HEK293 (cell line): ENCODE measurements at regions of chrX and their contacts with region 1.

Region 1: GRCh38 chrX:49191033-49191871 is 5.1 kb upstream of the PRICKLE3 start:
- H3K4me3 ChIP-seq: peak overlapping the region; percentile 70
- H3K27ac ChIP-seq: peak overlapping the region; percentile 83
- H3K4me1 ChIP-seq: peaks cover 2% of the 10 kb centered on the region; the same call in 1 of the 2 replicates
- CTCF ChIP-seq: no peak

Region 2: GRCh38 chrX:49165901-49166881 is 25.1 kb before region 1 on chrX:
- CTCF ChIA-PET with region 1: interaction called, 16 read pairs
- POLR2A ChIA-PET with region 1: interaction called, 16 read pairs
- H3K4me3 ChIP-seq: no peak overlapping the region
- H3K27ac ChIP-seq: peak overlapping the region; percentile 77
- H3K4me1 ChIP-seq: peaks cover 7% of the 10 kb centered on the region
- CTCF ChIP-seq: peak; percentile 81

Region 3: DNA sequence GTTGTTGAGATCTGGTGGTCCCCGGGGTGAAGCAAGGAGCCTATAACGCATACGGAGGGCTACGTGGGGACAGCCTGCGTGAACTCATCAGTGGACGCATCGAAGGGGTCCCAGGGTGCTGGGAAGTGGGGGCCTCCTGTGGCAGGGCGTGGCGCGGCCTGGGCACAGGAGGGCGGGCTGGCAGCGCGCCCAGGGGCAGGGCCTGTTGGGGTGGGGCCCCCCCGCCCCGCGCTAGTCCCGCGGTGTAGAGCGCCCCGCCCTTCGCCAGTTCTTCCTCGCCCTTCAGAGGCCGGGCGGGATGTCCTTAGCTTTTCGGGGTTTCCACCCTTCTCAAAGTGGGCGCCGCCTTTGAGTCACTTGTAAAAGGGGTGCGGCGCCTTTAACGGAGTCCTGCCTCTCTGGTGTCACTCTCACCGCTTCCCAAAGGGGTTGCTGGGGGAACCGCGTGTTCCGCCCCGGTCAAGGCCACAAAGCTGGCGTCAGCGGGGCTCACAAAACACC is 18.9 kb before region 1 on chrX:
- CTCF ChIA-PET with region 1: interaction called, 16 read pairs
- POLR2A ChIA-PET with region 1: interaction called, 16 read pairs
- H3K4me3 ChIP-seq: peak overlapping the region; percentile 52
- H3K27ac ChIP-seq: peak overlapping the region; percentile 94
- H3K4me1 ChIP-seq: peaks cover under 1% of the 10 kb centered on the region; the same call in 1 of the 2 replicates
- CTCF ChIP-seq: peak; percentile 15; the same call in 1 of the 2 replicates

Region 4: DNA sequence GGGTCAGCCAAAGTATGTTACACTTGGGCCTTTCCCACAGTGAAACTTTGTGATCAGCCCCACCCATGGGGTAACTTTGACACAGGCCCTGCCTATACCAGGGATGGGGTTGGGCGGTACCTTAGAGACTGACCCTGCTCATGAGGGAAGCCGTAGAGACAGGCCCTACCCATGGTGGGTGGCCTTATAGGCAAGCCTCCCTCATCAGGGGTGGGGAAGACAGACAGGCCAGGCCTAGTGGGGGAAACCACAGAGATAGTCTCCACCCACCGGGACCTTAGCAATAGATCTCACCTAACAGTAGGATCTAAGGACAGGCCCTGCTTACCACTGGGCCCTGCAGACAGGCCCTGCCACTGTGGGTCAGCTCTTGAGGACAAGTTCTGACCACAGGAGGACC is 12.7 kb before region 1 on chrX:
- CTCF ChIA-PET with region 1: interaction called, 4 read pairs
- POLR2A ChIA-PET with region 1: interaction called, 11 read pairs
- H3K4me3 ChIP-seq: no peak overlapping the region
- H3K27ac ChIP-seq: no peak overlapping the region
- H3K4me1 ChIP-seq: no peaks in the 10 kb centered on the region
- CTCF ChIP-seq: no peak

Region 5: DNA sequence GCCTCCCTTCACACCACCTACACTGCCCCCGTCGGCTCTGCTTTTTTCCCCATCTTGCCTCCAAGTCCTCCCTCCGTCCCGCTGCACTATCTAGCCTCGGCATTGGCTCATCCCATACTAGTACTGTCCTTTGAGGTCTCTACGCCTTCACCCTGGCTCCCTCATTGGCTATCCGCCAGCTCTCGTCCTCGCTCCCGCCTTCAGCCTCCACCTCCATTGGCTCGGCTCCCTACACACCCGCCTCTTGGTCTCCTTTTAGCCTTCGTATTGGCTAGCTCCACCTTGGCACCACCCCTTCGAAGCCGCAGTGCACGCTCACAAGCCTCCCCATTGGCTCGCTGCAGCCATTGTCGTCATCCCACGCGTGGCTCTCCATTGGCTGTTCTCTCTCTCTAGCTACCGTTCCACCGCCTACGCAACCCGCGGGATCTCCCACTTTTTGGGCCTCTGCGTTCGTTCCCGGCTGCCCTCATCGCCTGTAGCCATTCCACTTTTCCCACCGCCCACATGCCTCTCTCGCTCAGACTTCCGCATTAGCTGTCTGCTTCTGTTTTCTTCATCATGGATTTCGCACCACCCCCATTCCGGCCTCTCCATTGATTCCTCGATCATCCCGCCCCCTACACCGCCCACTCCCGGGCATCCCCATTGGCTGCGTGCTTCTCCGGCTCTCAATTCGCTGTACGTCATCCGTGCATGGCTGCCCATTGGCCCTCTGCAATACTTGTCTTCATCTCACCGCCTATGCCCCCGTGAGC is 77.9 kb after region 1 on chrX:
- CTCF ChIA-PET with region 1: interaction called, 4 read pairs
- POLR2A ChIA-PET with region 1: interaction called, 31 read pairs
- H3K4me3 ChIP-seq: peak overlapping the region; percentile 73
- H3K27ac ChIP-seq: peak overlapping the region; percentile 87
- H3K4me1 ChIP-seq: no peaks in the 10 kb centered on the region; the same call in 1 of the 2 replicates
- CTCF ChIP-seq: no peak